K562 (cell line): ENCODE measurements at regions of chr9 and their contacts with region 1.

Region 1: GRCh38 chr9:33404788-33405362 is 2.5 kb upstream of the AQP7 start:
- DNase-seq: peak in 1 of 4 experiments; percentile 12
- ATAC-seq: peak; percentile 25; the same call in 2 of the 3 replicates
- H3K4me3 ChIP-seq: no peak overlapping the region
- H3K27ac ChIP-seq: no peak overlapping the region
- H3K4me1 ChIP-seq: peaks cover 2 to 35% of the 10 kb centered on the region in 2 experiments; a peak in 2 of 5 replicates
- H3K27me3 ChIP-seq: no peaks in the 10 kb centered on the region
- CTCF ChIP-seq: no peak
- EP300 ChIP-seq: no peak
- POLR2A ChIP-seq: no peak
- RAD21 ChIP-seq: no peak

Region 2: DNA sequence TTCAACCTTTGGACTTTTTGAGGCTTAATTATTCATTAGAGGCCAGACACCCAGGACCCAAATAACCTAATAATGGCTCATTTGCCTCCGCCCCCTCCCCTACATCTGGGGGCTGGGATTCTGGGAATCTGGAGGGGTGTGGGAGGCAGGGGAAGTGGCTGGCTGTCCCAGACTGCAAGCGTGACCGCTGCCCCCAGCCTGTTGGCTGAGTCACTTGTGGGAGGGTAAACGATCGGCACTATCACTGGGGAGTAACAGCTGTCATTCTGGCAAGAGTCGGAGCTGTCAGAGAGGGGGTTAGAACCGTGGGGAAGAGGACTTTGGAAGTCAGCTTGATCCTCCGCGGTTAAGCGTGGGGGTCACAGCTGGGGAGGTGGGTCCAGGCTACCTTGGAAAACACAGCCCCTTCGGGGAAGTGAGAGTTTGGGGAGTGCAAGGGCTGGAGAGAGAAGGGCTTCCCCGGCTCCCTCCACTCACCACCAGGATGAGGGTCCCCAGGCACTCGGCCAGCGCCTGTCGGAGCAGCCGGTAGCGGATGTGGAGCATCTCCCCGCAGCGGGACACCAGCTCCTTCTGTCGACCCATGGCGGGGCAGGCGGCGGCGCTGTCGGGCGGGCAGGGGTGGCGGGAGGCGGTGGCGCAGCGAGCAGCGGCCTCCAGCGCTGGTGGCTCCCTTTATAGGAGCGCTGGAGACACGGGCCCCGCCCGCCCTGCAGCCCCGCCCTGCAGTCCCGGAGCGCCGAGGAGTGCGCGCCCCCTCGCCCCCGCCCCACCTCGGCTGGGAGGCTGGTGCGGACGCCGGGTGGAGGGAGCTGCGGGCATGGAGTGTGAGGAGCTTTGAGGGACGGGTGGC is 42.3 kb after region 1 on chr9 and contains the start of gene AQP3:
- CTCF ChIA-PET with region 1: no interaction called
- POLR2A ChIA-PET with region 1: no interaction called
- in situ Hi-C with region 1: no loop called
- intact Hi-C with region 1: loop called (anchors 2 kb)
- DNase-seq: peak; percentile 80 to 89 (median 83)
- ATAC-seq: peak; percentile 92
- H3K4me3 ChIP-seq: peak within 1 kb of the TSS; percentile 47
- H3K27ac ChIP-seq: peak within 1 kb of the TSS; percentile 80
- H3K4me1 ChIP-seq: peaks cover 33 to 47% of the 10 kb centered on the region in 2 experiments
- H3K27me3 ChIP-seq: no peaks in the 10 kb centered on the region
- CTCF ChIP-seq: peak in 2 of 3 experiments; percentile 55 to 98; a peak in 5 of 6 replicates
- EP300 ChIP-seq: peak; percentile 69
- POLR2A ChIP-seq: no peak
- RAD21 ChIP-seq: peak; percentile 23 to 44; a peak in 3 of 4 replicates
- polyA plus RNA-seq, gene AQP3: 4.2 to 6.0 TPM

Region 3: GRCh38 chr9:33466565-33467495 is 62.0 kb after region 1 on chr9:
- CTCF ChIA-PET with region 1: no interaction called
- POLR2A ChIA-PET with region 1: no interaction called
- in situ Hi-C with region 1: loop called (anchors 10 kb)
- intact Hi-C with region 1: loop called (anchors 1 kb)
- DNase-seq: peak; percentile 56 to 67 (median 62)
- ATAC-seq: peak; percentile 94
- H3K4me3 ChIP-seq: no peak overlapping the region
- H3K27ac ChIP-seq: no peak overlapping the region
- H3K4me1 ChIP-seq: peaks cover under 1 to 3% of the 10 kb centered on the region in 2 experiments; a peak in 3 of 5 replicates
- H3K27me3 ChIP-seq: no peaks in the 10 kb centered on the region
- CTCF ChIP-seq: peak; percentile 82 to 87 (median 83)
- EP300 ChIP-seq: no peak
- POLR2A ChIP-seq: no peak
- RAD21 ChIP-seq: peak; percentile 60 to 84

Region 4: DNA sequence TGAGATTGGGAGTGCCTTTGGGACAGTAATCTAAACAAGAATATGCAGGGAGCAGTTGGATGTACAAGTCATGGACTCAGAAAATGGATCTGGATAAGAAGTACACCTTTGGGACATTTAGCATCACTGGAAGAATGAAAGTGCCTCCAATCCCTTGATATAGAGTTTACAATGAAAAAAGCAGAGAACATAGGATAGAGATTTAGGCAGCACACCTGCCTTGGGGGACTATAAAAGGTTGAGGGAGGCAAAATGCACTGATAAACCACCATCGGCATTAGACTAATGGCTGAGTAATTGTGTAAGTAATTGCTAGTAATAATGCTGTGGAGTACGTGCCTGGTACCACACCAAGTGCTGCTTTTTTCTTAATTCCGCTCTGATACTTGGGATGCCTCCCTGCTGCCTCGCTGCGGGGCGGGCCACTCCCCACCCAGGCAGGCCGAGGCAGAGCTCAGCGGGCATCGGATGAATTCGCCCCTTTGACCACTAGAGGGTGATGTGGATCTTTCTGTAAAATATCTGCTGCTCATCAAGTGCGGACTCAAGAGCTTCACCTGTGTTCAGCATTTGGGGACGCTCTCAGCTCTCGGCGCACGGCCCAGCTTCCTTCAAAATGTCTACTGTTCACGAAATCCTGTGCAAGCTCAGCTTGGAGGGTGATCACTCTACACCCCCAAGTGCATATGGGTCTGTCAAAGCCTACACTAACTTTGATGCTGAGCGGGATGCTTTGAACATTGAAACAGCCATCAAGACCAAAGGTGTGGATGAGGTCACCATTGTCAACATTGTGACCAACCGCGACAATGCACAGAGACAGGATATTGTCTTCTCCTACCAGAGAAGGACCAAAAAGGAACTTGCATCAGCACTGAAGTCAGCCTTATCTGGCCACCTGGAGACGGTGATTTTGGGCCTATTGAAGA is 219.0 kb after region 1 on chr9:
- CTCF ChIA-PET with region 1: no interaction called
- POLR2A ChIA-PET with region 1: no interaction called
- in situ Hi-C with region 1: no loop called
- intact Hi-C with region 1: loop called (anchors 10 kb)
- DNase-seq: peak; percentile 67 to 81 (median 73)
- ATAC-seq: peak; percentile 94
- H3K4me3 ChIP-seq: no peak overlapping the region
- H3K27ac ChIP-seq: no peak overlapping the region
- H3K4me1 ChIP-seq: peaks cover 6 to 19% of the 10 kb centered on the region in 2 experiments; a peak in 3 of 5 replicates
- H3K27me3 ChIP-seq: no peaks in the 10 kb centered on the region
- CTCF ChIP-seq: peak; percentile 72 to 92 (median 85)
- EP300 ChIP-seq: no peak
- POLR2A ChIP-seq: no peak
- RAD21 ChIP-seq: peak; percentile 91 to 93